Ovary (tissue), 10 donors: ENCODE measurements at regions of chr18 and their contacts with region 1.

Region 1: DNA sequence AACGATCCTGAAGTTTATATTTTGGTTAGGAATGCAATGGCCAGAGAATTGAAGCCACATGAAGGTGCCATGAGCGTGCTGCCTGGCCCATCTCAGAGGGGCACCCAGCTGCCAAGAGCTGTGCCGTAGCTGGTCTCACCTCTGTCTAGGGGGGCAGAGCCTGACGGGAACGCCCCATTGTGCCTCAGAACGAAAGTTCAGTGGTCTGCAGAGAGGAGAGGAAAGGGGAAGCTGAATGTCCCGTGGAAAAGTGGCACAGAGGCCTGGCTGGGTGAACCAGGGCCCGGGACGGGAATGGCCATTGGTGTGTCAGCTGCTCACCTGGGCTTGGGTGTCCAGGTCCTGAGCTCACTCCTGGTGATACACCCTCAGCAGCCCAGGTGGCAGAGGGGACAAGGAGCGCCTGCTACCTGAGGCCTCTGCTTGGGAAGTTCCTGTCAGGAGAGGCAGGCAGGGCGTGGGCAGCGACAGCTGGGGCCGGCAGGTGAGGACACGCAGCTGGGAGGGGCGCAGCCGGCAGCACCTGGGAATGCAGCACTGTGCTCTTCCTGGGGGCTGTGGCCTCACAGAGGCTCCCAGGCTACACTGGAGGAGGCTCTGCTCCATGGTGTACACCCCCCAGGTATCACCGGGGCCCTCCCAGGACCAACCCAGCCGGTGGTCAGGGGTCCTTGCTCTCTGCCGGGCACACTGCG is 67.3 kb downstream of the PARD6G start:
- DNase-seq: no peak
- H3K4me3 ChIP-seq: no peak overlapping the region
- H3K27ac ChIP-seq: no peak overlapping the region
- H3K4me1 ChIP-seq: peaks cover 18% of the 10 kb centered on the region
- H3K27me3 ChIP-seq: no peaks in the 10 kb centered on the region
- CTCF ChIP-seq: no peak
- EP300 ChIP-seq: no peak
- POLR2A ChIP-seq: no peak

Region 2: DNA sequence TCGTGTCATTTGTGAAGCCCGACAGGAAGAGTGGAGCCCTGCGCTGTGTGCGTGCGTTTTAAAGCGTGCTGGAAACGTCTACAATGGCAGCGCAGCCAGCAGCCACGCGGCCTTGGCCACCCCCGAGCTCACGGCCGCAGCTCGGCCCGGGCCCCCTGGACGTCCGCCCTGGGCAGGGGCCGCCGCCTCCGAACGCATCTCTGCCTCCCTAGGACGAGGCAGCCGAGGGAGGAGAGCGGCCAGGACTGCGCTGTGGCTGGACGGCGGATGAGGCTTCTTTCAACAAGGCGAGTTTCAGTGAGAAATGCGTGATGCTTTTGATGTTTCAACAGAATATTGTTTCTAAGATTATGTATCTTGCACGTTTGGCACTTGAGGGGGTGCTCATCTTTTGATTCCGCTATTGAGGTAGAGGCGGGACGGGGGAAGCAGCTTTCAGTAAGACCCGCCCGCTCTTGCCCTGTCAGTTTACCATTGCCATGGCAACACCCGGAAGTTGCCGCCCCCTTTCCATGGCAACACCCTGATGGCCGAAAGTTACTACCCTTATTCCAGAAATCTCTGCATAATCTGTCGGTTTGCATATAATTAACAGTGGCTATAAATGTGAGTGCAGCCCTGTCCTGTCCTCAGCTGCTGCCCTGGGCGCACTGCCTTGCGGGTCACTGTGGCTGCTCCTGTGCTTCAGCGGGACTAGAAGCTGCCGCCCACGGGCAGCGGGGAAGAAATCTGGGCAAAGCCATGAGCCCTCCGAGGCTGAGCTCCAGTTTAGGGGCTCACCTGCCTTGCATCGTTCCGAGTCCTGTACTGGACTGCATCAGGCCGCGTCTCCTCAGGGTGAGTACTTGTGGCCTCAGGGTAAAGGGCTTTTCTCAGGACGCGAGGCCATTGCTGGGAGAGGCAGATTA is 32.3 kb before region 1 on chr18:
- intact Hi-C with region 1: loop called in 1 of 4 experiments (anchors 1 kb)
- DNase-seq: peak; percentile 81 to 93 (median 90)
- H3K4me3 ChIP-seq: peak overlapping the region; percentile 54
- H3K27ac ChIP-seq: peak overlapping the region in 1 of 2 donors; percentile 68
- H3K4me1 ChIP-seq: peaks cover 2% of the 10 kb centered on the region
- H3K27me3 ChIP-seq: no peaks in the 10 kb centered on the region
- CTCF ChIP-seq: no peak
- EP300 ChIP-seq: no peak
- POLR2A ChIP-seq: no peak